T-cell (primary cell): ENCODE measurements at regions of chr12 and their contacts with region 1.

Region 1: DNA sequence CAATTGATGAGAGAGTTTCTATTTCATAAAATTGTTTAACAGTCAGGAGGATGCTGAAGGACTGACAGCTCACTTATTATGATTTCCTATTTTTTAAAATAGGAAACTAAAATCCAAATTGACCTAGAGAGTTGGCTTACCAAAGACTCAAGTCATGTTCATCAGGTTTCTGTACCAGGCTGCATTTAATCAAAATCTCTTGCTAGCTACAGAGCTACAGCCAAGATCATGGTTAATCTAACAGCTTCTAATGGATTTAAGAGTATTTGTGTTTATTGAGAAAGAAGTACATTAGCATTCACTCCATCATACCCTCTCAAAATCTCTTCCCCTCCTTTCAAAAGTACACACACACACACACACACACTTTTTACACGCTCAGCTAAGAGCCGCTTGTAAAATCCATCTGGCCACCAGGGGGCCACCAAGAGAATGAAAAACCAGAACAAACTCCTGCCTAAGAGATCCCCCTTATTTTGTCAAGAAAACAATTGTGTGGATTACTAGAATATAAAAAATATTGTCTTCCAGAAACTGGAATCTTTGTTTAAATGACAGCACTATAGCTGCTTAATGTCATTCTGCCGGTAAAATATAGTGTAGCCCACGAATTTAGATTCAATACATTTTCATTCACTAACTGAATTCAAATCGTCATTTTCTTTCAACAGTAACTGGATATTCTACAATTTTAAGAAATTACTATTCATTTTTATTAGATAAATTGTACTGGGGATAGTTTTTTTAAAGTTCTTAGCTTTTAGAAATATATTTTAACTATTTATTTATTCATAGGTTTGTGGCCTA is 334.0 kb downstream of the BTG1 start:
- DNase-seq: peak; percentile 57 to 86 (median 77)
- ATAC-seq: peak; percentile 71 to 88 (median 76)
- H3K4me3 ChIP-seq: no peak overlapping the region
- H3K4me3 Mint-ChIP-seq: peak overlapping the region in 2 of 3 donors; percentile 14 to 23
- H3K27ac ChIP-seq: peak overlapping the region; percentile 13
- H3K27ac Mint-ChIP-seq: peak overlapping the region; percentile 66 to 88
- H3K4me1 ChIP-seq: peaks cover 2 to 5% of the 10 kb centered on the region in 2 experiments
- H3K4me1 Mint-ChIP-seq: peaks cover 25 to 39% (median 30%) of the 10 kb centered on the region in 3 donors
- H3K27me3 ChIP-seq: no peaks in the 10 kb centered on the region
- H3K27me3 Mint-ChIP-seq: no peaks in the 10 kb centered on the region

Region 2: DNA sequence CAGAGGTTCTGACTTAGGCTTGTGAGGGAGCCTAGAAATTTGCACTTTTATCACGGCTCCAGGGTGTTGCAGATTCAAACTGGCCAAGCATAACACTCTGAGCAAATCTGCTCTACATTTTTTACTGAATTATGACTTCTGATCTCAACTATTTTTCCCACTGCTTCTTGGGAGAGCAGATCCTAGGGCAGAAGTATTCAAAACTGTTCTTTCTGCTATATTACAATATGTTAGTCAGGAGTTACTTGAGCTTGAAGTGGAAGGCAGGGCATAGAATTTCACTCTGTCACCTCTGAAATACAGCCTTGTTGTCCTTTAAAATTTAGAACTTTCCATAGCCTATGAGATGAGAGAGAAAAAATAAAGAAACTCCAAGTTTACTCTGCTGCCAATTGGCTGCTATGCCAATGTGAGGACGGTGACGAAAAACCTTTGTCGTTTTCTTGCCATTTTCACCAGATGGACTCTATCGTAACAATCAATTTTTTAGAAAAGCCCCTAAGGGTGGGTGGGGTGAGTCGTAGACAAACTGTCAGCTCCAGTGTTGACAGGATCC is 737.5 kb before region 1 on chr12:
- CTCF ChIA-PET with region 1: no interaction called
- POLR2A ChIA-PET with region 1: no interaction called
- DNase-seq: no peak
- ATAC-seq: no peak
- H3K4me3 ChIP-seq: no peak overlapping the region
- H3K4me3 Mint-ChIP-seq: no peak overlapping the region
- H3K27ac ChIP-seq: no peak overlapping the region
- H3K27ac Mint-ChIP-seq: no peak overlapping the region
- H3K4me1 ChIP-seq: no peaks in the 10 kb centered on the region
- H3K4me1 Mint-ChIP-seq: no peaks in the 10 kb centered on the region
- H3K27me3 ChIP-seq: no peaks in the 10 kb centered on the region
- H3K27me3 Mint-ChIP-seq: no peaks in the 10 kb centered on the region

Region 3: GRCh38 chr12:91824991-91825390 is 13.3 kb after region 1 on chr12:
- CTCF ChIA-PET with region 1: interaction called, 3 to 10 read pairs
- POLR2A ChIA-PET with region 1: interaction called in 1 of 2 experiments, 4 read pairs
- DNase-seq: no peak
- ATAC-seq: no peak
- H3K4me3 ChIP-seq: no peak overlapping the region
- H3K4me3 Mint-ChIP-seq: no peak overlapping the region
- H3K27ac ChIP-seq: no peak overlapping the region
- H3K27ac Mint-ChIP-seq: no peak overlapping the region
- H3K4me1 ChIP-seq: no peaks in the 10 kb centered on the region
- H3K4me1 Mint-ChIP-seq: peaks cover 0 to 2% (median 0%) of the 10 kb centered on the region in 3 donors
- H3K27me3 ChIP-seq: no peaks in the 10 kb centered on the region
- H3K27me3 Mint-ChIP-seq: no peaks in the 10 kb centered on the region

Region 4: DNA sequence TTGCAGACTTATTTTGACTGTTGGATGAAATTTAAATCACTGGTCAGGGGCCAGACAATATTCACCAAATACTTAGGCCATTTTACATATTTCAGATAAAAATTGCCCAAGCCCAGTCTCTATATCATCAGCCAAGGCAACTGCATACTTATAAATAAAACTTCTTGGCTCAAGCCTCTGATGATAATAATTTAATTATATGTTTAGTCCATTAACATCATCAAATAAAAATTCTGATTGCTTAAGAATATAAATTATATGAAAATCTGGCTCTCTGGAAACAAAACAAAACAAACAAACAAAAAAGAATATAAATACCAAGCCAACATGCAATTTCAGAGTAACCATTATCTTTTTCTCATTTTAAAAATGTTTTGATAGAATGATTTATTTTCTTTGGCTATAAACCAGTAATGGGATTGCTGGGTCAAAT is 168.7 kb after region 1 on chr12:
- CTCF ChIA-PET with region 1: interaction called in 1 of 2 experiments, 11 read pairs
- POLR2A ChIA-PET with region 1: no interaction called
- DNase-seq: no peak
- ATAC-seq: no peak
- H3K4me3 ChIP-seq: no peak overlapping the region
- H3K4me3 Mint-ChIP-seq: no peak overlapping the region
- H3K27ac ChIP-seq: no peak overlapping the region
- H3K27ac Mint-ChIP-seq: no peak overlapping the region
- H3K4me1 ChIP-seq: peaks cover 12 to 22% of the 10 kb centered on the region in 2 experiments
- H3K4me1 Mint-ChIP-seq: peaks cover 60 to 65% (median 62%) of the 10 kb centered on the region in 3 donors
- H3K27me3 ChIP-seq: no peaks in the 10 kb centered on the region
- H3K27me3 Mint-ChIP-seq: no peaks in the 10 kb centered on the region

Region 5: DNA sequence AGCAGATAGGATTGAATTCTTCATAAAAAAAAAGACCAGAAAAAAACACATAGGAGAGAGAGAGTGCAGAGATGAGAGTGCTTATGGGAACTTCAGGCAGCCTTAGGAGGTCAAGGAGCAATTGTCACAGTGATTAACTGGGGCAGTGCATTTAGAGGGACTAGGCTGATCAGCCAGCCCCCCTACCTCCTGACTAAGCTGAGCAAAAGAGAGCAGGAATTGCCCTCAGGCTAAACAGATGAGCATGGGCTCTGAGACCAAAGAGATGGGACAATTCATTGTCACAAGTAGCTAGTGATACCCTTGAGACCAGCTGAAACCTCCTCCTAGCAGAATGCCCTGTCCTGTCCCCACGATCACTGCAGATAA is 210.0 kb after region 1 on chr12:
- CTCF ChIA-PET with region 1: interaction called, 3 to 10 read pairs
- POLR2A ChIA-PET with region 1: no interaction called
- DNase-seq: no peak
- ATAC-seq: no peak
- H3K4me3 ChIP-seq: no peak overlapping the region
- H3K4me3 Mint-ChIP-seq: peak overlapping the region in 1 of 3 donors; percentile 48
- H3K27ac ChIP-seq: no peak overlapping the region
- H3K27ac Mint-ChIP-seq: peak overlapping the region; percentile 25 to 64
- H3K4me1 ChIP-seq: peaks cover 3 to 5% of the 10 kb centered on the region in 2 experiments
- H3K4me1 Mint-ChIP-seq: peaks cover 38 to 50% (median 47%) of the 10 kb centered on the region in 3 donors
- H3K27me3 ChIP-seq: no peaks in the 10 kb centered on the region
- H3K27me3 Mint-ChIP-seq: no peaks in the 10 kb centered on the region

Region 6: DNA sequence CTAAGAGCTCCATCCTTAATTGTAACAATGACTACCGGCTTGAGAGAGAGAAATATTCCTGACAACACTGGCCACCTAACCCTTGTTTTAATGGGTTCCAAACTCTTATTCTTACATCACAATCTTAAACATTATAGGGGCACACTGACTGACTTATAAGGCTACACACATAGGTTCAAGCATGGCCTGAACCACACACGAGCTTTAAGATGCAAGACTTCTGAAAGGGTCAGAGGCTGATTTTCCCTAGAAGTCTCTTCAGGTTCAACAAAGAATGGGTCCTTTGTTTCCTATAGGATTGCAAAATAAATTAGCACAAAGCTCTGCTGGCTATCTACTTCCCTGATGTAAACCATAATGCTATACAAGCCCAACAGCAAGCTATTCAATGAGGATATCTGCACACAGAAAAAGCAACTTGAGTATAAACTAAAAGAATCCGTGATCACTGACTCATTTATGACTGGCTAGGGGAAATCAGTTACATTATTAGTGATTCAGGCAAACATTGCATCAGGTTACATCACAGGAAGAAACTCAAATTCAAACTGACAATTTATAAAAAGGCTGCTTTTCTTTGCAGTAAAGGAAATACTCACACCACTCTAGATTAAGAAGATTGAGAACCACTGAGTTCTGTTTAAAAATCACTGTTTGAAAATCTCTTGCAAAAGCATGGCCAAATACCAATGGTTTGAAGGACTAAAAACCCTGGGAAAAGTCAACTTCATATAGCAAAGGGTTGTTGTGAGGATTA is 325.5 kb after region 1 on chr12:
- CTCF ChIA-PET with region 1: interaction called, 3 to 9 read pairs
- POLR2A ChIA-PET with region 1: interaction called, 6 to 12 read pairs
- DNase-seq: no peak
- ATAC-seq: peak in 3 of 4 experiments; percentile 2 to 28 (median 22)
- H3K4me3 ChIP-seq: peak overlapping the region; percentile 77 to 98
- H3K4me3 Mint-ChIP-seq: peak overlapping the region; percentile 100
- H3K27ac ChIP-seq: peak overlapping the region; percentile 91
- H3K27ac Mint-ChIP-seq: peak overlapping the region; percentile 99 to 100
- H3K4me1 ChIP-seq: peaks cover 35 to 69% of the 10 kb centered on the region in 2 experiments
- H3K4me1 Mint-ChIP-seq: peaks cover 53 to 66% (median 61%) of the 10 kb centered on the region in 3 donors
- H3K27me3 ChIP-seq: no peaks in the 10 kb centered on the region
- H3K27me3 Mint-ChIP-seq: no peaks in the 10 kb centered on the region